ENCODE measurements at regions of chr17 and their contacts with region 1.

Region 1: GRCh38 chr17:5468075-5468473 is 708 bp downstream of the DHX33 start:
- DNase-seq: no peak
- H3K4me3 ChIP-seq: peak overlapping the region; percentile 84
- H3K27ac ChIP-seq: peak overlapping the region; percentile 16; the same call in 1 of the 2 replicates
- H3K4me1 ChIP-seq: peaks cover 18% of the 10 kb centered on the region
- H3K27me3 ChIP-seq: no peaks in the 10 kb centered on the region
- CTCF ChIP-seq: no peak

Region 2: DNA sequence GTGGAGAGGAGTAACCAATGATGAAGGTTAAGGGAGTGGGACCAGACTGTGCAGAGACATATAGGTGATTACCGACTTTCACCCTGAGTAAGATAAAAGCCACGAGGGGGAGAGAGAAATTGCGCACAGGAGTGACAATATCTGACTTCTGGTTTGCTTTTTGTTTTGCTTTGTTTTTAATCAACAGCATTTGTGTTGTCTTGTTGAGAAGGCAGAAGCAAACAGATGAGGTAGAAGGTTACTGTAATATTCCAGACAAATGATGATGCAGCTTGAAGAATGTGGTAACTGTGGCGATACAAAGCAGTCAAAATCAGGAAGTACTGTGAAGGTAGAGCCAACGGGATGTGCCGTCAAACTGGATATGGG is 771.7 kb before region 1 on chr17:
- CTCF ChIA-PET with region 1: interaction called, 10 read pairs
- POLR2A ChIA-PET with region 1: no interaction called
- intact Hi-C with region 1: no loop called
- DNase-seq: no peak
- H3K4me3 ChIP-seq: no peak overlapping the region
- H3K27ac ChIP-seq: no peak overlapping the region
- H3K4me1 ChIP-seq: 0 out of 2 replicates have a peak, but pooled peaks cover 3% of the 10 kb centered on the region
- H3K27me3 ChIP-seq: no peaks in the 10 kb centered on the region
- CTCF ChIP-seq: no peak

Region 3: GRCh38 chr17:5364156-5364555 is 103.9 kb before region 1 on chr17:
- CTCF ChIA-PET with region 1: no interaction called
- POLR2A ChIA-PET with region 1: no interaction called
- intact Hi-C with region 1: no loop called
- DNase-seq: no peak
- H3K4me3 ChIP-seq: no peak overlapping the region
- H3K27ac ChIP-seq: no peak overlapping the region
- H3K4me1 ChIP-seq: no peaks in the 10 kb centered on the region; the same call in 1 of the 2 replicates
- H3K27me3 ChIP-seq: no peaks in the 10 kb centered on the region
- CTCF ChIP-seq: no peak

Region 4: GRCh38 chr17:5419356-5419958 is 48.6 kb before region 1 on chr17 and contains the start of gene NUP88:
- CTCF ChIA-PET with region 1: no interaction called
- POLR2A ChIA-PET with region 1: no interaction called
- intact Hi-C with region 1: loop called (anchors 5 kb)
- DNase-seq: peak; percentile 91 to 96
- H3K4me3 ChIP-seq: peak within 1 kb of the TSS; percentile 98
- H3K27ac ChIP-seq: peak within 1 kb of the TSS; percentile 99
- H3K4me1 ChIP-seq: peaks cover 52% of the 10 kb centered on the region
- H3K27me3 ChIP-seq: no peaks in the 10 kb centered on the region
- CTCF ChIP-seq: no peak
- total RNA-seq, gene NUP88: 88.6 and 93.1 TPM in 2 replicates